ENCODE measurements at regions of chr6 and their contacts with region 1.

Region 1: DNA sequence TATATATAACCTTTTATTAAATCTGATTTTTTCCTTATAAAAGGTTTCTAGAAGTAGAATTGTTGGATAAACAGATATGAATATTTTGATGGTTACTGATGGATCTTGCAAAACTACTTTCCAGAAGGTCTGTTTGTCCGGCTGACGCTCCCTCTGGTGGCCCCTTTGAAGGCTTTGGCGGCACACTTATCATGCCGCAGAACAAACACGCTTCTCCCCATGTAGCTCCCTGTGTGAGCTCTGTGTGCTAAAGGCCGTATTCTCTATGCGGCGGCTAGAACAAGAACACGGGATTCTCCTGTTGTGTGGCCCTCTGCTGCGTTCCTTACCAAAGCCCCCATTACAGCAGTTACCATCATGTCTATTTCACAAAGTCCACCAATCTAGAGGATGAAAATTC is 30.0 kb downstream of the PPP1R3G start:
- DNase-seq: peak in 1 of 2 donors; percentile 41
- ATAC-seq: peak in 6 of 8 donors; percentile 26 to 73 (median 48)
- H3K4me3 ChIP-seq: no peak overlapping the region
- H3K27ac ChIP-seq: no peak overlapping the region
- H3K4me1 ChIP-seq: peaks cover 0 to 9% (median 3%) of the 10 kb centered on the region in 9 donors
- H3K27me3 ChIP-seq: no peaks in the 10 kb centered on the region
- CTCF ChIP-seq: peak; percentile 11 to 60 (median 40)

Region 2: GRCh38 chr6:5078121-5078669 is 37.0 kb before region 1 on chr6:
- intact Hi-C with region 1: loop called in 3 of 10 experiments (anchors 5 kb)
- DNase-seq: no peak
- ATAC-seq: peak in 3 of 8 donors; percentile 65 to 71 (median 65)
- H3K4me3 ChIP-seq: no peak overlapping the region
- H3K27ac ChIP-seq: no peak overlapping the region
- H3K4me1 ChIP-seq: peaks cover 0 to 4% (median 0%) of the 10 kb centered on the region in 9 donors
- H3K27me3 ChIP-seq: no peaks in the 10 kb centered on the region
- CTCF ChIP-seq: peak in 7 of 9 donors; percentile 18 to 53 (median 33)

Region 3: DNA sequence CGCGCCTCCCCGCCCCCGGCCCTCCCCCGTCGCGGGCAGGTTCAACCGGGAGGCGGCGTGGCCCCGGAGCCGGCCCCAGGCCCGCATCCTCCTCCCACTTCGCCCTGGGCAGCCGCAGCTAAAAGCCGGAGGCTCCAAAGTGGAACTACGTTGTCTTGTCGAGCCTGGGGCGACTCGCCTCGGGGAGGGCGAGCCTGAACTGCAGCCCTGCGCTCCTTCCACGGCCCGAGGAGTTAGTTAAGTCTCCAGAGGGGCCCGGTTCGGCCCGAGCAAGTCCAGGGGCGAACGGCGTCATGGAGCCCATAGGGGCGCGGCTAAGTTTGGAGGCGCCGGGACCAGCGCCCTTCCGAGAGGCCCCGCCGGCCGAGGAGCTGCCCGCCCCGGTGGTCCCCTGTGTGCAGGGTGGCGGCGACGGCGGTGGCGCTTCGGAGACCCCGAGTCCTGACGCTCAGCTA is 29.9 kb before region 1 on chr6 and contains the start of gene PPP1R3G:
- intact Hi-C with region 1: loop called in 2 of 10 experiments (anchors 2 to 5 kb)
- DNase-seq: peak; percentile 60 to 65
- ATAC-seq: peak; percentile 60 to 81 (median 70)
- H3K4me3 ChIP-seq: peak within 1 kb of the TSS; percentile 64 to 78 (median 68)
- H3K27ac ChIP-seq: peak within 1 kb of the TSS; percentile 82 to 95 (median 88)
- H3K4me1 ChIP-seq: peaks cover 7 to 43% (median 20%) of the 10 kb centered on the region in 9 donors
- H3K27me3 ChIP-seq: peaks cover 0 to 30% (median 0%) of the 10 kb centered on the region in 7 donors
- CTCF ChIP-seq: peak in 1 of 9 donors; percentile 18
- total RNA-seq, gene PPP1R3G: 6.3 to 12.2 (median 9.2) TPM

Region 4: GRCh38 chr6:5214570-5215052 is 99.4 kb after region 1 on chr6:
- intact Hi-C with region 1: no loop called
- DNase-seq: peak; percentile 34 to 60
- ATAC-seq: peak; percentile 84 to 95 (median 92)
- H3K4me3 ChIP-seq: no peak overlapping the region
- H3K27ac ChIP-seq: peak overlapping the region in 6 of 10 donors; percentile 7 to 38 (median 30)
- H3K4me1 ChIP-seq: peaks cover 0 to 48% (median 16%) of the 10 kb centered on the region in 9 donors
- H3K27me3 ChIP-seq: no peaks in the 10 kb centered on the region
- CTCF ChIP-seq: peak; percentile 37 to 79 (median 70)